Esophagus muscularis mucosa (tissue), 4 donors: ENCODE measurements at regions of chr14 and their contacts with region 1.

Region 1: GRCh38 chr14:24108336-24108874 is 6.2 kb upstream of the DCAF11 start:
- DNase-seq: no peak
- H3K4me3 ChIP-seq: no peak overlapping the region
- H3K27ac ChIP-seq: peak overlapping the region in 3 of 4 donors; percentile 13 to 42 (median 39)
- H3K4me1 ChIP-seq: peaks cover 9 to 15% (median 13%) of the 10 kb centered on the region in 4 donors
- H3K27me3 ChIP-seq: no peaks in the 10 kb centered on the region
- CTCF ChIP-seq: no peak
- EP300 ChIP-seq: no peak
- POLR2A ChIP-seq: no peak

Region 2: DNA sequence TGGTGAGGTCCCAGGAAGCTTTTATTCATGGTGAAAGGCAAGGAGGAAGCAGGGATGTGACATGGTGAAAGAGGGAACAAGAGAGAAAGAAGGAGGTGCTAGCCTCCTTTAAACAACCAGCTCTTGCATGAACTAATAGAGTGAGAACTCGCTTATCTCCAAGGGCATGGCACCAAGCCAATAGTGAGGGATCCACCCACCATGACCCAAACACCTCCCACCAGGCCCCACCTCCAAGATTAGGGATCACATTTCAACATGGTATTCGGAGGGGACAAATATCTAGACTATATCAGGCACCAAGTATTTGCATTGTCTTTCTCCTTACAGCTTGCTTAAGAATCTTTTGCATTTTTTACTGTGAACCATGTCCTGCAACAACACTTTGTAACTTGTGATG is 246.7 kb before region 1 on chr14:
- intact Hi-C with region 1: no loop called
- DNase-seq: no peak
- H3K4me3 ChIP-seq: no peak overlapping the region
- H3K27ac ChIP-seq: no peak overlapping the region
- H3K4me1 ChIP-seq: peaks cover 0 to 4% (median 0%) of the 10 kb centered on the region in 4 donors
- H3K27me3 ChIP-seq: no peaks in the 10 kb centered on the region
- CTCF ChIP-seq: no peak
- EP300 ChIP-seq: no peak
- POLR2A ChIP-seq: no peak

Region 3: DNA sequence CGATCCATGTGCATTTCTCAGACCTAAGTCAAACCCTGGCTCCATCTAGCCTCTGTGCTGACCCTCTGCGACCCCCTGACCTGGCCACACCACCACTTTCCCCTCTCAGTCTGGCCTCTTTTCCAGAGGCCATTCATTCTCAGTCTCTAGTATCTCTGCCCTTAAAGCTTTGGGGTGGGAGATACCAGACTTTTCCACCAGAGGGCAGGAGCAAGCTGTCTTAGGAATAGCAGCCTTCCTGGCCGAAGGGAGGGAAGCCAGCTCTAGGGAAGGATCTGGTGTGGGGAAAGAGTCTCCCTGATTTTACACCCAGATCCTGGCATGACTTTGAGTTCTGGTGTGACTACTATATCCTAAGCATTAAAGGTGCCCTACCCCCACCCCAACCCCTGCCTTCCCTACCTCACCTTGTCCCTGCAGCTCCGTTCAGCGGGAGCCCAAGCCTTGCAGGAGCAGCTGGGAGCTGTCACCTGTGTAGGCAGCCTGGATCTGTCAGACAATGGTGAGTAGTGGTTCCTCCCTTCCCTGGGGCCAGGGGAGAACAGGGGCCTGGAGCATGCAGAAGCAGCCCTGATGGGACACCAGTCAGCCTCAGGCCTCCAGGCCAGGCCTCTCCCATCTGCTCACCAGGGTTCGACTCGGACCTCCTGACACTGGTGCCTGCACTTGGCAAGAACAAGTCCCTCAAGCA is 50.0 kb before region 1 on chr14:
- intact Hi-C with region 1: loop called (anchors 2 kb)
- DNase-seq: peak; percentile 96
- H3K4me3 ChIP-seq: no peak overlapping the region
- H3K27ac ChIP-seq: no peak overlapping the region
- H3K4me1 ChIP-seq: peaks cover 0 to 9% (median 4%) of the 10 kb centered on the region in 4 donors
- H3K27me3 ChIP-seq: peaks cover 0 to 16% (median 0%) of the 10 kb centered on the region in 4 donors
- CTCF ChIP-seq: peak; percentile 88 to 93 (median 91)
- EP300 ChIP-seq: no peak
- POLR2A ChIP-seq: no peak

Region 4: DNA sequence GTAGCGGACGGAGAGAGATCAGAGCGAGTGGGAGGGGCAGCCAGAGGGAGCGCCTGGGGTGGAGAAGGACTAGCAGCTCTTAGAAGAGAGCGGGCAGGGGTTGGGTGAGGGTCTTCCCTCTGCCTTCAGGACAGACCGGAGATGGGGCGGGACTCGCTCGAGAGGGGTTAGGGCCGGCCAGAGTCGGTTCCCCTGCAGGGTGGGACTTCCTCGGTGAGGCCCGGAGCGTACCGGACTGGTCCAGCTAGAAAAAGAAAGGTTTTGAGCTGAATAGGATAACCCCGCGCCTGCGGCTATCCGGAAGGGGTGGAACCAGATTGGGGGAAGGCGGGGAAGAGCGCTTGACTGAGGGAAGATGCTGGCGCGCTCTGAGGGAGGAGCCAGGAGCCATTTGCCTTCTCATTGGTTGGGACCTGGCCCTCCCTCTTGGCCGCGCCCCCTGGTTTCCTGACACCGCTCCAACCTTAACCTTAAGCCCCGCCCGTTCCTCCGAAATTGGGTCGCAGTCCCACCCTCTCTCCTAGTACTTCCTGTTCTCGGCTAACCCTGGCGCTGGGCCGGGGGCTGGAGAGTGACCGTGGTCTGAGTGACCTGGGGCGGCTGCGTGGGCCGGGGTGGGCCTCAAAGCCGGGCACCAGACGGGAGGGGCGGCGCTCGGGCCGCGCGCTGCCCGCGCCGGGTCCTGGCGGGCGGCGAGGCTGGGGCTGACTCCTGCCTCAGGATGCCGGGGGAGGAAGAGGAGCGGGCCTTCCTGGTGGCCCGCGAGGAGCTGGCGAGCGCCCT is 38.8 kb after region 1 on chr14 and contains the start of gene RNF31:
- intact Hi-C with region 1: no loop called
- DNase-seq: peak; percentile 100
- H3K4me3 ChIP-seq: peak within 1 kb of the TSS; percentile 63 to 92 (median 78)
- H3K27ac ChIP-seq: peak within 1 kb of the TSS; percentile 88 to 94 (median 90)
- H3K4me1 ChIP-seq: peaks cover 19 to 53% (median 42%) of the 10 kb centered on the region in 4 donors
- H3K27me3 ChIP-seq: no peaks in the 10 kb centered on the region
- CTCF ChIP-seq: no peak
- EP300 ChIP-seq: no peak
- POLR2A ChIP-seq: no peak
- total RNA-seq, gene RNF31: 21.7 to 33.3 (median 26.8) TPM

Region 5: GRCh38 chr14:24160850-24161804 is 52.7 kb after region 1 on chr14 and contains the start of gene IRF9:
- intact Hi-C with region 1: loop called (anchors 5 kb)
- DNase-seq: peak; percentile 99
- H3K4me3 ChIP-seq: peak within 1 kb of the TSS; percentile 66 to 73 (median 69)
- H3K27ac ChIP-seq: peak within 1 kb of the TSS; percentile 88 to 92 (median 90)
- H3K4me1 ChIP-seq: peaks cover 27 to 48% (median 39%) of the 10 kb centered on the region in 4 donors
- H3K27me3 ChIP-seq: no peaks in the 10 kb centered on the region
- CTCF ChIP-seq: peak in 2 of 3 experiments; percentile 94 to 95
- EP300 ChIP-seq: no peak
- POLR2A ChIP-seq: no peak
- total RNA-seq, gene IRF9: 39.5 to 78.3 (median 63.2) TPM

Region 6: DNA sequence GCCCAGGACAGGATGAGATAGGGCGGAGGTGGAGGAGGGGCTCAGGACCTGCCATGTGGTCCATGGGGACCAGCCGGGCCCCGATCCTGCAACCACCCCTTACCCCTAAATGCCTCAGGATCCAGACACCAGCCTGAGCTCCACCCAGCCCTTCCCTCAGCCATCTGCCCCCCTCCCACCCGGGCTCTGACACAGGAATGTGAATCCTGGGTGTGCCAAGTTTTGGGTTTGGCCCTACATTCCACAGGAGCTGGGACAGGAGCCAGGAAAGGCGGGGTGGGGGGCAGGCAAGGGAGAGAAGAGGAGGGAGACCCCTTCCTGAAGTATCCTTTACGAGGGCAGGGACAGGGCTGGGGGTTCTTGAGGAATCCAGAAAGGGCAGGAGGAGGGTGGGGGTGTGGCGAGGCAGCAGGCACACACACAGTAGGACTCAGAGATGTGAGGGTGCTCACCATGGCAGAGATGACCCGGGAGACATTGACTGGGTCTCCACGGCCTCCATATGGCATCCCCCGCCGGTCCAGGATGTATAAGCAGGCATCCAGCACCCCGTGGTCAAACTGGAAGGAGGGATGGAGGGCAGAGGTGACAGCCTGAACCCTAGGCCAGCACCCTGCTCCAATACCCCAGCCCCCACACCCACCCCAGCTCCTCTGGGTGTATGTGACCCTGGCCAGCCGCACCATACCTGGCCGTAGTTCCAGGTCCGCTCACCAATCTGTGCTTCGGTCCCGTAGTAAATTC is 151.0 kb after region 1 on chr14:
- intact Hi-C with region 1: no loop called
- DNase-seq: no peak
- H3K4me3 ChIP-seq: no peak overlapping the region
- H3K27ac ChIP-seq: no peak overlapping the region
- H3K4me1 ChIP-seq: peaks cover 0 to 9% (median 2%) of the 10 kb centered on the region in 4 donors
- H3K27me3 ChIP-seq: no peaks in the 10 kb centered on the region
- CTCF ChIP-seq: no peak
- EP300 ChIP-seq: no peak
- POLR2A ChIP-seq: no peak